Activated CD4-positive, alpha-beta T cell treated with anti-CD3 and anti-CD28 coated beads for 36 hours (primary cell): ENCODE measurements at regions of chr1 and their contacts with region 1.

Region 1: DNA sequence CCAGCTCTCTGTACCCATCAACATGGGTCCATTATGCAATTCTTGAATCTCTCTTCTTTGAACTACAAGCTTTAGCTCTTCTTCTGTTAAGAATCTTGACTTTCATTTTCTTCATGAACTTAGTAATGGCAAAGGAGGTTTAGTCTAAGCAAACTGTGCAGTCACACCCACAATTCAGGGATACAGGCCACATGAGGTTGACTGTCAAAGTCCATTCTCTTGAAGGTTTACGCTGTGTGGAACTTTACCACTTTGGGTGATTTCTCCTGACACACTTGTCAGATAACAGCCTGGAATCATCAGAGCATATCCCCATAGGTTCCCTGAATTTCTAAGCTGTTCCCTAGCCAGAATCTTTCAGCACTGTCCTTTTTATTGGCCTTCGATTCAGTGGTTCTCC is 48.0 kb upstream of the NHLH2 start:
- DNase-seq: no peak
- ATAC-seq: no peak
- H3K4me3 Mint-ChIP-seq: no peak overlapping the region
- H3K27ac Mint-ChIP-seq: no peak overlapping the region
- H3K4me1 Mint-ChIP-seq: no peaks in the 10 kb centered on the region
- H3K27me3 Mint-ChIP-seq: peaks cover 3% of the 10 kb centered on the region

Region 2: GRCh38 chr1:115842948-115843347 is 46.0 kb before region 1 on chr1:
- CTCF ChIA-PET with region 1: no interaction called
- POLR2A ChIA-PET with region 1: no interaction called
- intact Hi-C with region 1: loop called in 1 of 2 experiments (anchors 1 kb)
- DNase-seq: no peak
- ATAC-seq: no peak
- H3K4me3 Mint-ChIP-seq: no peak overlapping the region
- H3K27ac Mint-ChIP-seq: no peak overlapping the region
- H3K4me1 Mint-ChIP-seq: peaks cover 5% of the 10 kb centered on the region
- H3K27me3 Mint-ChIP-seq: peaks cover 46% of the 10 kb centered on the region

Region 3: DNA sequence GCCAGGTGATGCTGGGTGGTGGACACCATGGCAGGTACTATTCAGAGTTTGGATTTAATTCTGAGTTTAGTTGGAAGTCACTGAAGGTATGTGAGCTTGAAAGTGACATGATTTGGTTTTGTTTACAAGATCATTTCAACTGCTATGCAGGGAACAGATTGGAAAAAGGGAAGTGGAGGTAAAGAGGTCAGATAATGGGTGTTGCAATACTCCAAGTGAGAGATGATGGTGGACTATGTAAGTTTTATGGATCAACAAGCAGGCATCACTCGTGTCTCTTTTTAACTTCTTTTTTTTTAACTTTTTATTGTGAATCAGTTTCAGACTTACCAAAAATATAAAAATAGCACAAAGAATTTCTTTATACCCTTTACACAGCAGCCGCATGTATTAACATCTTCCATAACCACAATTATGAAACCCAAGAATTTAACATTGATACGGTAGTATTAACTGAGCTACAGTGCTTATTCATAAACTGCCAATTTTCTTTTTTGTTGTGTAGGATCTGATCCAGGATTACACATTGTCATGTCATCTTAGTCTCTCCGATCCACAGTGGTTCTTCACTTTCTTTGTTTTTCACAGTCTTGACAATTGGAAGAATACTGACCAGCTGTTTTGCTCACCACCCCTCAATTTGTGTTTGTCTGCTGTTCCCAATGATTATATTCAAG is 23.1 kb before region 1 on chr1:
- CTCF ChIA-PET with region 1: no interaction called
- POLR2A ChIA-PET with region 1: no interaction called
- intact Hi-C with region 1: no loop called
- DNase-seq: no peak
- ATAC-seq: no peak
- H3K4me3 Mint-ChIP-seq: no peak overlapping the region
- H3K27ac Mint-ChIP-seq: no peak overlapping the region
- H3K4me1 Mint-ChIP-seq: no peaks in the 10 kb centered on the region
- H3K27me3 Mint-ChIP-seq: peaks cover 24% of the 10 kb centered on the region